ENCODE measurements at regions of chr10 and their contacts with region 1.

Region 1: GRCh38 chr10:123559066-123559822 is 106.9 kb upstream of the GPR26 start:
- DNase-seq: peak; percentile 32 to 78
- H3K4me3 ChIP-seq: no peak overlapping the region
- H3K4me1 ChIP-seq: no peaks in the 10 kb centered on the region
- H3K27me3 ChIP-seq: no peaks in the 10 kb centered on the region

Region 2: GRCh38 chr10:122648599-122649428 is 910.4 kb before region 1 on chr10:
- in situ Hi-C with region 1: loop called (anchors 25 kb)
- DNase-seq: peak; percentile 34 to 64
- H3K4me3 ChIP-seq: no peak overlapping the region
- H3K4me1 ChIP-seq: no peaks in the 10 kb centered on the region
- H3K27me3 ChIP-seq: no peaks in the 10 kb centered on the region

Region 3: GRCh38 chr10:123043409-123043925 is 515.8 kb before region 1 on chr10:
- in situ Hi-C with region 1: loop called (anchors 10 kb)
- DNase-seq: peak; percentile 55 to 67
- H3K4me3 ChIP-seq: no peak overlapping the region
- H3K4me1 ChIP-seq: no peaks in the 10 kb centered on the region
- H3K27me3 ChIP-seq: no peaks in the 10 kb centered on the region

Region 4: DNA sequence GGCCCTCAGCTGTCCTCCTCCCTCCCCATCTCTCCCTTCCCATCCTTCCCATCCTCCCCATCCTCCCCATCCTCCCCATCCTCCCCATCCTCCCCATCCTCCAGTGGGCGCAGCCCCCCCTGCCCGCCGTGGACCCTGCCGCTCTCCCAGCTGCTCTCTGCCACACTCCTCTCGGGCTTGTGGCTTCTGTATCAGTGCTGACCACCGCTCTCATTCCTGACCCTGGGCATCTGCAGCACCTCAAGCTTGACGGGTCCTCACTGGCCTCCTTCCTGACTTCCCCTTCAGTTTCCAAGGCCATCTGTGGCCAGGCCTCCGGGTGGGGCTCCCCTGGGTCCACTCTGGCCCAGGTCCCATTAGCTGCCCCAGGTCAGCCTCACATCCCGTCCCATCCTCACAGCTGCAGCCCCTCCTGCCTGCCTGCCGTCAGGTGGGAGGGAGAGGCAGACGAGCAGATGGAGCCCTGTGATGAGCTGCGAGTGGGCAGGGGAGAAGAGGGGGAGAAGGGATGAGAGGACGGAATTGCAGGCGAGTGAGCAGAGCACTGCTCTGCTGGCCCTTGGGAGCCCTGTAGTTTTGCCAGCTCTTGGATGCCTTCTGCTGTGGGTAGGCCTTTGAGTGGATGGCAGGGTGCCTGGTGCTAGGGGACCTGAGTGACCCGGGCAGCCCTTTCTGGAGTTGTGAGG is 938.1 kb after region 1 on chr10:
- in situ Hi-C with region 1: no loop called
- DNase-seq: no peak
- H3K4me3 ChIP-seq: no peak overlapping the region
- H3K4me1 ChIP-seq: no peaks in the 10 kb centered on the region
- H3K27me3 ChIP-seq: no peaks in the 10 kb centered on the region